AG04449 (cell line): ENCODE measurements at regions of chr4 and their contacts with region 1.

Region 1: DNA sequence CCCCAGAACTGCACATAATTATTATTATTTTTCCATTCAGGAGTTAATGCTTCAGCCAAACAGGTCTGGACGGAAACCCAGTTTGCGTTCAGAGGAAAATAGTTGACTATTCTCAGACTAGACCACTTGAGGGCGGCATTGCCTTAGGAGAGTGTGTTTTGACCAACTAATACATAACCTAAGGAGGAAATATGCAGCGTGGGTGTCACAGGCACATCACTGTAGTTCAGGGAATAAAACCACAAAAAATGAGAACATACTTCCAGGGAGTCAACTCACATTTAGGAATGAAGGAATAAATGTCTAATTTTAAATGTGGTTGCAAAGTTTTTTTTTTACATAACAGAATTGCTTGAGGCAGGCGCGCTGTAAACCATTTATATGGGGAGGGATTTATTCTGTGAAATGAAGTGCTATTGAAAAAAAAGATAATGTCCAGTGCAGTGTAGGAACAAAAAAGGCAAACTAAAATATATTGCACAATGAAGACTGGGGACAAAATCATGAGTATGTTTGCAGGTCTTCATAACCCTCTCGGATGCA is 93.3 kb downstream of the SYNPO2 start:
- DNase-seq: peak; percentile 96
- H3K4me3 ChIP-seq: no peak overlapping the region
- CTCF ChIP-seq: peak; percentile 59

Region 2: GRCh38 chr4:118711052-118711451 is 270.9 kb before region 1 on chr4:
- CTCF ChIA-PET with region 1: no interaction called
- POLR2A ChIA-PET with region 1: no interaction called
- DNase-seq: no peak
- H3K4me3 ChIP-seq: no peak overlapping the region
- CTCF ChIP-seq: no peak

Region 3: DNA sequence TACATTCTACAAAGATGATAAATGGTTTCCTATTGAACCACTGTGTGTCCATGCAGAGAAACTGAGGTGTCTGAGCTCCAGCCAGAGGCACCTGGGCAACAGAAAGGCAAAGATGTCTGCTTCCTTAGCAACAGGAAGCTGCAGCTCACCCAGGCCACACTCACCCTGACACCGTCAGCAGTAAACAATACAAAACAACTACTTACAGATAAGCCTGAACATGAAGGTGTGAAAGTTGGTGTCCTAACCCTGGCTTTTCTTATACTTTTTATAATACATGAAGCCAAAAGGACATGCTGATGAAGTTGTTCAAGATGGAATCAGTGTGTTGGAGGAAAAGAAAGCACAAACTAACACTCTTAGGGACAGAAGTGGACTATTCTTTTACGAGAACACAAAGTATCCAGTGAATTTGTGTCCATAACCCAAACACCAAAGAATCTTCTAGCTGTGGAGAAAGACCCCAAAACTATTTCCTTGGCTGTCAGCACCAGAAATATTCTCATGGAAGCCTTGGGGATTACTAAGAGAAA is 24.1 kb after region 1 on chr4:
- CTCF ChIA-PET with region 1: no interaction called
- POLR2A ChIA-PET with region 1: no interaction called
- DNase-seq: no peak
- H3K4me3 ChIP-seq: no peak overlapping the region
- CTCF ChIP-seq: no peak

Region 4: GRCh38 chr4:119025916-119026661 is 44.2 kb after region 1 on chr4:
- CTCF ChIA-PET with region 1: interaction called, 14 read pairs
- POLR2A ChIA-PET with region 1: interaction called, 3 read pairs
- DNase-seq: peak; percentile 88
- H3K4me3 ChIP-seq: peak overlapping the region; percentile 68
- CTCF ChIP-seq: no peak

Region 5: DNA sequence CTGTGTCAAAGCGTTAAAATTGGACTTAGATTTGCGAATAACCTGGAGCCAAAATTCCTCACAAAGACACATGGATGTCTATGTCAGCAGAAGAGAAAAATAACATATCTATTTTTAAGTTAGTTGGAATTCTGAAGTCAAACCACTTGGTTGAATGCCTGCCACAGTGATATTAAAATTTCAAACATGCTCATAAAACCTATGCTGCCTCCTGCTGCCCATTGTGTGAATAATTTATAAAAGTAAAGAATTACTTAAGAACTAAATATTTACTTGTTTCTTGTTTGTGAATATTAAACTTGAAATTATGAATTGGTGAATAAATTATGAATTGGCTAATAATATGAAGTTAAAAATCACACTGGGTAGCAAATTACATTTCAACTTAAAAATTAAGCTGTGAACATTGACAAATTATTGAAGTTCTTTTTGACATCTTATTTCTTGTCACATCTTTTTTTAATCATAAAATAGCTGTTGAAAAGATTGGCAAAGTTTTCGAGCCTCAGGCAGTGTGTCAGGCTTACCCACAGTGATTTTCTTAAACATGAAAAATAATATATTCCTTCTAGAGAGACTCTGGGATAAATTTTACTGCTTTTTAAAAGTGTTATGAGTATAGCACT is 304.6 kb after region 1 on chr4:
- CTCF ChIA-PET with region 1: interaction called, 15 read pairs
- POLR2A ChIA-PET with region 1: interaction called, 3 read pairs
- DNase-seq: peak; percentile 50
- H3K4me3 ChIP-seq: no peak overlapping the region
- CTCF ChIP-seq: peak; percentile 25